Dendritic cell treated with granulocyte-macrophage colony-stimulating factor and Interleukin-4, amounts not matched to agents 40 ng/mL and 50 ng/mL, for 4 days (primary cell): ENCODE measurements at regions of chr12 and their contacts with region 1.

Region 1: GRCh38 chr12:63967358-63968145 is 123.1 kb downstream of the SRGAP1 start:
- H3K4me3 Mint-ChIP-seq: no peak overlapping the region
- H3K27ac Mint-ChIP-seq: peak overlapping the region; percentile 53
- H3K4me1 Mint-ChIP-seq: peaks cover 55% of the 10 kb centered on the region
- H3K27me3 Mint-ChIP-seq: no peaks in the 10 kb centered on the region

Region 2: DNA sequence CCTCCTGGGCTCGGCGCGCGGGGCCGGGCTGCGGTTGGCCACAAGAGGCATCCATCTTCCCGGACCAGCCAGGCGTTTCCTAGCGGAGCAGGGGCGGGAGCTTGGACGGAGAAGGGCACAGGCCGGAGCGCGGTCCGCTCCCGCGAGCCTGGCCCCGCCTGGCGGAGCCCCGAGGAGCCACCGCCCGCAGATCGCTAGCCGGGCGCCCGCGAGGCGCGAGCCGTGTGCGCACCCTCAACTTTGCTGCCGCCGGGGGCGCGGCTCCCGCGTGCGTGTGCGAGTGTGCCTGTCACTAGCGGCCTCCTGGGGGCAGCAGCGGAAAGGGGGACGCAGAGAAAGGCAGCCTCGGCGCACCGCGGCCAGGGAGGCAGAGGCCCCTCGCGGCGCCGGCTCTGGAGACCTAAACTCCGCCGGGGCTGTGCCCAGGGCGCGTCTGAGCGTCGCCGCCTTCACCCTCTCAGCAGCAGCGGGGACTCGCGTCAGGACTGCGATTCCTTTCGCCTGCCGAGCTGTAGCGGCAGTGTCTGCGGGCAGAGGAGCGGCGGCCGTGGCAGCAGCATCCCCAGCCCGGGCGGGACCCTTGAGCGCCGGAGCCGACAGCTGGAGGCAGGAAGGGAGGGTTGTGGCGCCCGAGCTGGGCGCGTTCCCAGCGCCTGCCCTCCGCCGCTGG is 123.7 kb before region 1 on chr12:
- intact Hi-C with region 1: no loop called
- H3K4me3 Mint-ChIP-seq: peak overlapping the region; percentile 100
- H3K27ac Mint-ChIP-seq: peak overlapping the region; percentile 95
- H3K4me1 Mint-ChIP-seq: peaks cover 26% of the 10 kb centered on the region
- H3K27me3 Mint-ChIP-seq: peaks cover 16% of the 10 kb centered on the region

Region 3: GRCh38 chr12:63917864-63918799 is 49.4 kb before region 1 on chr12:
- intact Hi-C with region 1: loop called (anchors 5 kb)
- H3K4me3 Mint-ChIP-seq: peak overlapping the region; percentile 35
- H3K27ac Mint-ChIP-seq: peak overlapping the region; percentile 85
- H3K4me1 Mint-ChIP-seq: peaks cover 46% of the 10 kb centered on the region
- H3K27me3 Mint-ChIP-seq: no peaks in the 10 kb centered on the region

Region 4: GRCh38 chr12:64004641-64005040 is 37.1 kb after region 1 on chr12:
- intact Hi-C with region 1: no loop called
- H3K4me3 Mint-ChIP-seq: no peak overlapping the region
- H3K27ac Mint-ChIP-seq: no peak overlapping the region
- H3K4me1 Mint-ChIP-seq: peaks cover 9% of the 10 kb centered on the region
- H3K27me3 Mint-ChIP-seq: no peaks in the 10 kb centered on the region

Region 5: DNA sequence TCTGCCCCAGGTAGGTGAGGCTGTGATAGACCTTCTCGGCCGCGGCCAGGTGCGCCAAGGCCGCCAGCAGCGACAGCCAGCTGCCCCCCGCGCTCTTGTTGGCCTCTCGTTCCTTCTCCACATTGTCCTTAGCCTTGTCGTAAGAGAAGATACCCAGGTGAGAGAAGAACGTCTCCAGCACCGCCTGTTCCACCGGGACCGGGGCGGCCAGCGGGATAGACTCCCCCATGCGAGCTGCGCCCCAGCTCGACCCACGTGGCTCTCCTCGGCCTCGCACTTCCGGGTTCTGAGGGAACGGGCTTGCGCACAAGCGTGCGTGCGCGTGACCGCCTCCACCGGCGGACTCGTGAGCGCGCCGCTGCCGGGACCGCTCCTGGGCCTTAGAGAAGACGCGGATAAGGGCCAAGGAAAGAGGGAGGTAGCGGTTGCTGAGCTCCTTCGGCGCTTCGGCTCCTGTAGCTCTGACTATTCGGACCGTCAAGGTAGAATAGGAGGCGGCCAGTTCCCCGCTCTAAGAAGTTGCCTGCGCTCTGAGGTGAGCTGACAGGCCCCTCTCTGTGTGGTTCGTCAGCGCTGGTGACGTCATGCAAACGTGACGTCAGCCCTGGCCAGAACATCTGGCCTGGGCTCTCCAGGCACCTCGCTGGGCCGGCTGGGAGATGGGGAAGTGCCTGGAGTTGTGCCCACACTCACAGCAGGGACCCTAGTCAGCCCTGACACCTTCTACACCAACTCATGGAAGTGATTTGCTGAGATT is 254.6 kb after region 1 on chr12 and contains the start of gene KICS2:
- intact Hi-C with region 1: loop called (anchors 10 kb)
- H3K4me3 Mint-ChIP-seq: peak within 1 kb of the TSS; percentile 97
- H3K27ac Mint-ChIP-seq: peak within 1 kb of the TSS; percentile 89
- H3K4me1 Mint-ChIP-seq: peaks cover 28% of the 10 kb centered on the region
- H3K27me3 Mint-ChIP-seq: no peaks in the 10 kb centered on the region